Natural killer cell (primary cell): ENCODE measurements at regions of chr22 and their contacts with region 1.

Region 1: DNA sequence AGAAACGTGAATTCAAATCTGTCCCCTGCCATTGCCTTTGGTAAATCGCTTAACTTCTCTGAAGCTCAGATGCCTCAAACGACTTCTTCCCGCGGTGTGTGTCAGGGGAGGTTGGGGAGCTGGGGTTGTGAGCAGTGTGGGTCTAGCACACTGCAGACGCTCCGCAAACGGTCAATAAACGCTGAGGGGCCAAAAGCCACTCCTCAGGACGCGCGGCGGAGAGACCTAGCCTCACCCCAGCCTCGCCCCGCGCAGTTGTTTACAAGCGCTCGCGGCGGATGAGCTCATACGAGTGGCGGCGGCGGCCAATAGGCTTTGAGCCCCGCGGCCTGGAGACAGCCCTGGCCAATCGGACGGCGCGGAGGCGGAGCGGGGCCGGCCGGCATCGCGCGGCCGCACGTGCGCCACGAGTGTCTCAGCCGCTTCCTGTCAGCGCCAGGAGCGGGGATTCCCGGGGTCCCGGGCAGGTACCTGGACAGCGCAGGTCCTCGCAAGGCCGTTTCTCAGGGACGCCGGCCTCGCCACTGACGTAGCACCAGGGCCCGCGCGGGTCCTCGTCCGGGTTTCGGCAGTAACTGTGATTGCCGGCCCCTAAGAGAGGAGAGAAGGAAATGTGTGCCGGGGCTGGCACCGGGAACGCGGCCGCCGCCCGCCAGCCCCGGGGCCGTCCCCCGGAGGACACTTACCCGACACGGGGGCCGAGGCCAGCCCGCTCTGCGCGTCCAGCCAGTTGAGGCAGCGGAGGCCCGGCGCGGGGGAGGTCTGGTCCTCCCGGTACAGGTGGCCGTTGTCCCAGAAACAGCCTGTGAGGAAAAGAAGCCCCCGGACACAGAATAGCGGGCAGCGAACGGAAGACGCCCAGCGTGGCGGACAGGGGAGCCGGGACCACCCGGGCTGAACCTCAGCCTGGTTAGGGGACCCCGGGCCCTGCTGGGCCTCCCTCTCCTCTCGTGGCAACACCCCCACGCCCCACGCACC is 1.5 kb downstream of the PIK3IP1 start:
- DNase-seq: peak; percentile 96 to 97
- ATAC-seq: peak; percentile 82 to 95 (median 84)
- H3K4me3 ChIP-seq: peak overlapping the region; percentile 98
- H3K4me3 Mint-ChIP-seq: peak overlapping the region; percentile 99
- H3K27ac ChIP-seq: peak overlapping the region; percentile 99
- H3K27ac Mint-ChIP-seq: peak overlapping the region; percentile 99
- H3K4me1 ChIP-seq: peaks cover 67% of the 10 kb centered on the region
- H3K4me1 Mint-ChIP-seq: peaks cover 51 to 52% of the 10 kb centered on the region in 2 donors
- H3K27me3 ChIP-seq: no peaks in the 10 kb centered on the region
- H3K27me3 Mint-ChIP-seq: no peaks in the 10 kb centered on the region
- CTCF ChIP-seq: no peak

Region 2: GRCh38 chr22:30262917-30263741 is 1027.7 kb before region 1 on chr22:
- intact Hi-C with region 1: loop called (anchors 5 kb)
- DNase-seq: peak; percentile 76 to 88
- ATAC-seq: no peak
- H3K4me3 ChIP-seq: no peak overlapping the region
- H3K4me3 Mint-ChIP-seq: peak overlapping the region; percentile 28
- H3K27ac ChIP-seq: no peak overlapping the region
- H3K27ac Mint-ChIP-seq: peak overlapping the region; percentile 34 to 84
- H3K4me1 ChIP-seq: peaks cover 61% of the 10 kb centered on the region
- H3K4me1 Mint-ChIP-seq: peaks cover 29 to 52% of the 10 kb centered on the region in 2 donors
- H3K27me3 ChIP-seq: no peaks in the 10 kb centered on the region
- H3K27me3 Mint-ChIP-seq: no peaks in the 10 kb centered on the region
- CTCF ChIP-seq: peak; percentile 100

Region 3: DNA sequence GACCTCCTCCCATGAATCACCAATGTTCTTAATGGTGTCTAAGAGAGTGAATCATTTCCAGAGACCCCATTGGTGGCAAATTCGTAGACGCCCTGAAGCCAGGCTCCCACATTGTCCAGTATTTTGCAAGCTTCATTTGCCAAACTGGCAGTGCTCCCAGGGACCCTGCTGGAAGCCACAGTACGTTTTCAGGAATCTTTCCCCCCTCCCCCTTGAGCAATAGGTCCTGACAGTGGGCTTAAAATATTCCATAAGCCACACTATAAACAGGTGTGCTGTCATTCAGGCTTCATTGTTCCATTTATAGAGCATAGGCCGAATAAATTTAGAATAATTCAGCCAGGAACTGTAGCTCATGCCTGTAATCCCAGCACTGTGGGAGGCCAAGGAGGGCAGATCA is 447.5 kb before region 1 on chr22:
- intact Hi-C with region 1: no loop called
- DNase-seq: no peak
- ATAC-seq: no peak
- H3K4me3 ChIP-seq: no peak overlapping the region
- H3K4me3 Mint-ChIP-seq: no peak overlapping the region
- H3K27ac ChIP-seq: no peak overlapping the region
- H3K27ac Mint-ChIP-seq: no peak overlapping the region
- H3K4me1 ChIP-seq: no peaks in the 10 kb centered on the region
- H3K4me1 Mint-ChIP-seq: no peaks in the 10 kb centered on the region
- H3K27me3 ChIP-seq: no peaks in the 10 kb centered on the region
- H3K27me3 Mint-ChIP-seq: peaks cover 6% of the 10 kb centered on the region in 2 donors
- CTCF ChIP-seq: no peak

Region 4: DNA sequence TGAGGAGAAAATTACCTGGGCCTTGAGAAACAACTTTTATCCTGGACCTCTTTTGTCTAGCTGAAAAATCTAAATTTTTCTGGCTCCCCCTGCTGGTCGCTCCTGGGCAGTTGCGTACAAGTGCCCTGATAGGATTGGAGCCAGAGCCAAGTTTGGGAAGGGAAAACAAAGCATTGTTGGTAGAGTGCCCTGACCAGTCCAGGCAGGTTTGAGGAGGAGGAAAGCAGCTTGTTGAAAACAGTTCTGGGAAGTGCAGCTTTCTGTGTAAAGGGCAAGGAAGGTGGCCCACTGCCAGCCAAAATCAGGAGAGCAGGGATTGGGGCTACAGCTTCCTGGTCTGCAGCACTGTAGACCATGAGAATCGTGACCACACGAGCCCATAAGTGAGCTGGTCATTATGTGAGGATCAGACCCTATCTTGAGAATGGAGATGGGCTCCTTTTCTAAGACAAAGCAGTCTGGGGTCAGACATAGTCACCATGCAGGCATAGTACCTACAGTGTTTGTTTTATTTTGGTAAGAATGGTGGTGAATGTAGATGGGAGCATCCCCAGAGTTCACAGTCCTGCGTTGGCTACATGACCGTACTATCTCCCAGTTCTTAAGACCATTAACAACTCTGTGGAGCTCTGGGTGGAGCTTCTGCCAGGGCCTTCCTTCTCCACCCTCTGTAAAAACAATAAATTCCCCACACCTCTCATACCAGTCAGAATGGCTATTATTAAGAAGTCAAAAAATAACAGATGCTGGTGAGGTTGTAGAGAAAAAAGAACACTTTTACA is 22.8 kb after region 1 on chr22:
- intact Hi-C with region 1: loop called (anchors 1 kb)
- DNase-seq: peak; percentile 48 to 79
- ATAC-seq: peak in 2 of 3 donors; percentile 63 to 66
- H3K4me3 ChIP-seq: no peak overlapping the region
- H3K4me3 Mint-ChIP-seq: no peak overlapping the region
- H3K27ac ChIP-seq: no peak overlapping the region
- H3K27ac Mint-ChIP-seq: peak overlapping the region in 1 of 2 donors; percentile 48
- H3K4me1 ChIP-seq: peaks cover 3% of the 10 kb centered on the region
- H3K4me1 Mint-ChIP-seq: peaks cover 0 to 4% of the 10 kb centered on the region in 2 donors
- H3K27me3 ChIP-seq: no peaks in the 10 kb centered on the region
- H3K27me3 Mint-ChIP-seq: no peaks in the 10 kb centered on the region
- CTCF ChIP-seq: peak; percentile 93

Region 5: GRCh38 chr22:31345331-31346254 is 54.8 kb after region 1 on chr22:
- intact Hi-C with region 1: loop called (anchors 2 kb)
- DNase-seq: peak; percentile 85 to 97
- ATAC-seq: peak; percentile 73 to 87 (median 77)
- H3K4me3 ChIP-seq: peak overlapping the region; percentile 72
- H3K4me3 Mint-ChIP-seq: peak overlapping the region; percentile 85
- H3K27ac ChIP-seq: peak overlapping the region; percentile 8
- H3K27ac Mint-ChIP-seq: peak overlapping the region; percentile 76 to 82
- H3K4me1 ChIP-seq: peaks cover 60% of the 10 kb centered on the region
- H3K4me1 Mint-ChIP-seq: peaks cover 48 to 51% of the 10 kb centered on the region in 2 donors
- H3K27me3 ChIP-seq: no peaks in the 10 kb centered on the region
- H3K27me3 Mint-ChIP-seq: no peaks in the 10 kb centered on the region
- CTCF ChIP-seq: peak; percentile 81

Region 6: GRCh38 chr22:31399211-31400028 is 108.6 kb after region 1 on chr22 and contains the start of gene DRG1:
- intact Hi-C with region 1: loop called (anchors 2 kb)
- DNase-seq: peak; percentile 94 to 98
- ATAC-seq: peak; percentile 96 to 99 (median 97)
- H3K4me3 ChIP-seq: peak within 1 kb of the TSS; percentile 78
- H3K4me3 Mint-ChIP-seq: peak within 1 kb of the TSS; percentile 93
- H3K27ac ChIP-seq: peak within 1 kb of the TSS; percentile 79
- H3K27ac Mint-ChIP-seq: peak within 1 kb of the TSS; percentile 91 to 98
- H3K4me1 ChIP-seq: peaks cover 16% of the 10 kb centered on the region
- H3K4me1 Mint-ChIP-seq: peaks cover 15 to 16% of the 10 kb centered on the region in 2 donors
- H3K27me3 ChIP-seq: no peaks in the 10 kb centered on the region
- H3K27me3 Mint-ChIP-seq: no peaks in the 10 kb centered on the region
- CTCF ChIP-seq: no peak
- total RNA-seq, gene DRG1: 50.2 to 60.3 (median 55.4) TPM